Caco-2 (cell line): ENCODE measurements at regions of chr20 and their contacts with region 1.

Region 1: DNA sequence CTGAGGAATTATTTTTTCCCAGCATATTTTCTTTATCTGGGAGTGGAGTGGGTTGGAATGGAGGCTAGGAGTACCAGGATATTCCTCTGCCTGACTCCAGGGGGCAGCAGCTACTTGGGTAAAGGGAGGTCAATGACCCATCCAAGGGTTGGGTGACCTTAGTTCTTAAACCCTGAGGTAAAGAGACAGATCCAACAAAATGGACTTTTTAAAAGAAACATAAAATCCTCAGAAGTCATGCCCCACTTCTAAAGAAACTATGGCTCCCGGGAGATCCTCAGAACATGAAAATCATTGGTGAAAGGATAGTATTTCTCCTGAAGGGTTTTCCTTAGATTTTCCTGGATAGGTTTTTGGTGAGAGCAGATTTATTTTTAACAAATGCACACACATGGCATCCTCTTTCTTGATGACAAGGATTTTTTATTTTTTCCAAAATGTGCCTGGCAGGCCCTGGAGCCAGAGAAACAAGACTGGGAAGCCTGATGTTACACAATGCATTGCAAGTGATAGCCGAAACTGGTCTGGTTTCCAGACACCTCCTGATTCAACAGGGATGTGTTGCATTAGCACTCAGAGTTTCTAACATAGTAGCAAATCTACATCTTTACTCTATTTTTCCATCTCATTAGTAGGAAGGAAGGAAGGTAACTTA is 240.9 kb upstream of the BTBD3 start:
- DNase-seq: peak; percentile 68 to 84
- H3K4me3 ChIP-seq: no peak overlapping the region
- H3K4me3 Mint-ChIP-seq: no peak overlapping the region
- H3K27ac Mint-ChIP-seq: no peak overlapping the region
- H3K4me1 ChIP-seq: no peaks in the 10 kb centered on the region; the same call in 1 of the 2 replicates
- H3K4me1 Mint-ChIP-seq: peaks cover 1% of the 10 kb centered on the region
- H3K27me3 ChIP-seq: no peaks in the 10 kb centered on the region
- H3K27me3 Mint-ChIP-seq: peaks cover 7% of the 10 kb centered on the region
- CTCF ChIP-seq: peak; percentile 94 to 95

Region 2: DNA sequence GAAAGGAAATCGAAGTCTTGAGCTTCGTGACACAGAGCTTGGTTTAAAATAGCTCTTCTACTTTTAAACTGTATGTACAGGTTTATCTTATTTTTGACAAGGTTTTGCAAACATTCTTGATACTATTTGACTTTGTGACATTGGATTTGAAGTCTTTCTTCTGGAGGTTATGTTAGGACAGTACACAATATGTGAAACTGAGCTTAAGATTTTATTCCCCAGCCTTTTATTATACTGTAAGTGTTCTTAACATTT is 145.7 kb after region 1 on chr20:
- CTCF ChIA-PET with region 1: no interaction called
- POLR2A ChIA-PET with region 1: no interaction called
- intact Hi-C with region 1: loop called (anchors 5 kb)
- DNase-seq: no peak
- H3K4me3 ChIP-seq: no peak overlapping the region
- H3K4me3 Mint-ChIP-seq: peak overlapping the region; percentile 25
- H3K27ac Mint-ChIP-seq: peak overlapping the region; percentile 91
- H3K4me1 ChIP-seq: peaks cover 41% of the 10 kb centered on the region
- H3K4me1 Mint-ChIP-seq: peaks cover 15% of the 10 kb centered on the region
- H3K27me3 ChIP-seq: no peaks in the 10 kb centered on the region
- H3K27me3 Mint-ChIP-seq: no peaks in the 10 kb centered on the region
- CTCF ChIP-seq: no peak

Region 3: DNA sequence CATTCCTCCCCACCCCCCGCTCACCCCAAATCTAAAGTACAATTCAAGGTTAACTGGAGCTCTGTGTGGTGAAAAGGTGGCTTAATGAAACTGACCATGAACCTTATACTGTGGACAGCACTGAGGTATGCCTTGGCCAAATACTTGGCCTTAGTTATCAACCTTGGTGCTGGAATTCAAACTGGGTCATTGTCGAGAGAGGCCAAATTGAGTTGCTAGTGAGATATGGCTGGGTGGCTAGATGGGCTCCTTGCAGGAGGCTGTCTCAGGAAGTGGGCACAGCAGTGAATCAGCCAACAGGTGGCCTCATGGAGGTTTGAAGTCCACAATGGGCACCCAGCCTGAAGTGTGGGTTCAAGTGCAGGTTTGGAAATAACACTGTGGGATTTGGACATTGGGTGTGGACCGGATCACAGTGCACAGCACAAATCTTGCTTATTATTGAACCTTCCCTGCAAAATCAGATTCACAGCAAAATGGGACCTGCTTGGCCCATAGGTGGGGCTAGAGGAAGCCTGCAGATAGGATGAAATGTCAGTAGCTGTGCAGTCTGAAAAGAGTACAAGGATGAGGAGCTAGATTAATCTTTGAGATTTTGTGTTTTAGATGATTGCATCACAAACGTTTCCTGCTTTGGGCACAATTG is 235.4 kb after region 1 on chr20:
- CTCF ChIA-PET with region 1: no interaction called
- POLR2A ChIA-PET with region 1: no interaction called
- intact Hi-C with region 1: loop called (anchors 5 kb)
- DNase-seq: peak in 1 of 2 experiments; percentile 46
- H3K4me3 ChIP-seq: no peak overlapping the region
- H3K4me3 Mint-ChIP-seq: no peak overlapping the region
- H3K27ac Mint-ChIP-seq: no peak overlapping the region
- H3K4me1 ChIP-seq: 0 out of 2 replicates have a peak, but pooled peaks cover 2% of the 10 kb centered on the region
- H3K4me1 Mint-ChIP-seq: peaks cover 6% of the 10 kb centered on the region
- H3K27me3 ChIP-seq: no peaks in the 10 kb centered on the region
- H3K27me3 Mint-ChIP-seq: no peaks in the 10 kb centered on the region
- CTCF ChIP-seq: peak; percentile 41 to 65

Region 4: DNA sequence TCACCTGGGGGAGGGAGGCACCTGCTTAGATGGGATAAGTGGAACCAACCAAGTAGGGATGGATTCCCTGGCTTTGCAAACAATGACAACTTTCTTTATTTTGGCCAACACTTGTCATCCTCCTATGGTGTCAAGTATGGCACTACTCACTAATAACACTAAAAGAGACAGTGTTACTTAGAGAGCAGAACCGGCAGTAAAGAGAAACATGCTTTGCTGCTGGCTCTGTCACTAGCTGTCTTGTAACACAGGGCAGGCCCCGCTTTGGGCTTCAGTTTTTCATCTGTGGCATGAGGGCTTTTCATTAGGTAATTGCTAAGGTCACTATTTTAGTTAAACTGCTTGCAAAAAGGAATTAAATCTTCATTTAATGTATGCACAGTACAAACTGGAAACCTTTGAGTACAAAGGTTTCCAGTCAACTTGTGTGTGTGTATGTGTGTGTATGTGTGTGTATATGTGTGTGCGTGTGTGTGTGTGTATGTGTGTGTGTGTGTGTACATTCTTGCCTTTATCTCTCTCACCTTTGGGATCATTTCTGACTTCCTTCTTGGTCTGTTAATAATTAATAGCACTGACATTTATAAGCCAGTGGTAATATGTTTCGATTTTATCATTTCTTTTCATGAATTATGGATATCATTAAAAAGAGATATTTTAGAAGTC is 305.7 kb after region 1 on chr20:
- CTCF ChIA-PET with region 1: no interaction called
- POLR2A ChIA-PET with region 1: no interaction called
- intact Hi-C with region 1: loop called (anchors 2 kb)
- DNase-seq: peak; percentile 53 to 72
- H3K4me3 ChIP-seq: peak overlapping the region; percentile 10; the same call in 1 of the 2 replicates
- H3K4me3 Mint-ChIP-seq: peak overlapping the region; percentile 57
- H3K27ac Mint-ChIP-seq: peak overlapping the region; percentile 15
- H3K4me1 ChIP-seq: peaks cover 13% of the 10 kb centered on the region
- H3K4me1 Mint-ChIP-seq: peaks cover 17% of the 10 kb centered on the region
- H3K27me3 ChIP-seq: no peaks in the 10 kb centered on the region
- H3K27me3 Mint-ChIP-seq: no peaks in the 10 kb centered on the region
- CTCF ChIP-seq: no peak

Region 5: GRCh38 chr20:12207875-12208274 is 531.1 kb after region 1 on chr20:
- CTCF ChIA-PET with region 1: interaction called, 3 read pairs
- POLR2A ChIA-PET with region 1: no interaction called
- intact Hi-C with region 1: loop called (anchors 1 kb)
- DNase-seq: peak; percentile 46 to 70
- H3K4me3 ChIP-seq: no peak overlapping the region
- H3K4me3 Mint-ChIP-seq: no peak overlapping the region
- H3K27ac Mint-ChIP-seq: no peak overlapping the region
- H3K4me1 ChIP-seq: no peaks in the 10 kb centered on the region
- H3K4me1 Mint-ChIP-seq: no peaks in the 10 kb centered on the region
- H3K27me3 ChIP-seq: no peaks in the 10 kb centered on the region; the same call in 1 of the 2 replicates
- H3K27me3 Mint-ChIP-seq: peaks cover 14% of the 10 kb centered on the region
- CTCF ChIP-seq: peak; percentile 77 to 78

Region 6: GRCh38 chr20:12358006-12358656 is 681.4 kb after region 1 on chr20:
- CTCF ChIA-PET with region 1: interaction called, 3 read pairs
- POLR2A ChIA-PET with region 1: no interaction called
- intact Hi-C with region 1: loop called (anchors 1 kb)
- DNase-seq: peak in 1 of 2 experiments; percentile 18
- H3K4me3 ChIP-seq: no peak overlapping the region
- H3K4me3 Mint-ChIP-seq: no peak overlapping the region
- H3K27ac Mint-ChIP-seq: no peak overlapping the region
- H3K4me1 ChIP-seq: no peaks in the 10 kb centered on the region
- H3K4me1 Mint-ChIP-seq: no peaks in the 10 kb centered on the region
- H3K27me3 ChIP-seq: no peaks in the 10 kb centered on the region
- H3K27me3 Mint-ChIP-seq: no peaks in the 10 kb centered on the region
- CTCF ChIP-seq: peak in 1 of 2 experiments; percentile 41